CD4-positive, alpha-beta memory T cell (primary cell): ENCODE measurements at regions of chr17 and their contacts with region 1.

Region 1: DNA sequence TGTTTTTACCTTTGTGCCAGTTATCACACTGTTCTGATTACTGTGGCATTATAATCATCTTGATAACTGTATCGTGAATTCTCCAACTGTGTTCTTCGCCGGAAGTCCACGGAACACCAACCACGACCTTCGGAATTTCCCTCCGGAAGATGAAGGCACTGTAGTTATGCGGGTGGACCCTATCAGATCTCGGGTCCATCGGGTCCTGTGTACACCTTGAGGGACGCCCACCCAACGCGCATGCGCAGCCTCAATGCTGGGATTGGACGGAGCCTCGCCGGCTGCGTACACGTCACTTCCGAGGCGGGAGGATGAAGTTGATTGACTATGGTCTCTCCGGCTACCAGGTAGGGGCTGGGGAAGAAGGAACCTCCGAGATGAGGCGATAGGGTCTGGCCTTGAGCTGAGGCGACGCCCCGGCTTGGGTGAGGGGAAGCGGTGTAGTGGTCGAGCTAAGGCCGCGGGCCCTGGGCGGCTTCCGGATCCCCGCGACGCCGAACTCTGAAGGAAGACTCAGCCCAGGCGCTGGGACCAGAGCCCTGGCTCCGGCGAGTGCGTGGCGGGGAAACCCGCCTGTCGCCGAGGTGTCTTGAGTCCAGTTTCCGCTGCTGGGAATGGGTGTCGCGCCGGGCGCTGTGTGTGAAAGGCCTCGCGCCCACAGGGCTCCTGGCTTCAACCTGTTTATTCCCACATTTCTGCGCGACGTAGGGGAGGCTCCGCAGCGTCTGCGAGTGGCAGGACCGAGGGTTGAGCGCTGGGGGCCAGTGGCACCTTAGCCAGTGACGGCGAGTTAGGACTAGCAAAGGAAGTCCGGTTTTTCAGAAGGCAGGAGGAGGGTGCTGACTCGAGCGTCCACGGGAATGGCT is at the start of gene DHRS7B:
- DNase-seq: peak; percentile 94 to 97 (median 94)
- H3K4me3 ChIP-seq: peak within 1 kb of the TSS; percentile 31 to 97
- H3K4me3 Mint-ChIP-seq: peak within 1 kb of the TSS; percentile 91 to 98 (median 96)
- H3K27ac ChIP-seq: peak within 1 kb of the TSS; percentile 85
- H3K27ac Mint-ChIP-seq: peak within 1 kb of the TSS; percentile 95 to 99 (median 97)
- H3K4me1 ChIP-seq: peaks cover 27% of the 10 kb centered on the region
- H3K4me1 Mint-ChIP-seq: peaks cover 20 to 42% (median 35%) of the 10 kb centered on the region in 4 donors
- H3K27me3 ChIP-seq: no peaks in the 10 kb centered on the region
- H3K27me3 Mint-ChIP-seq: no peaks in the 10 kb centered on the region
- total RNA-seq, gene DHRS7B: 8.2 to 9.5 TPM

Region 2: GRCh38 chr17:21318439-21318838 is 191.6 kb after region 1 on chr17:
- CTCF ChIA-PET with region 1: no interaction called
- POLR2A ChIA-PET with region 1: no interaction called
- intact Hi-C with region 1: loop called (anchors 2 kb)
- DNase-seq: no peak
- H3K4me3 ChIP-seq: no peak overlapping the region
- H3K4me3 Mint-ChIP-seq: no peak overlapping the region
- H3K27ac ChIP-seq: no peak overlapping the region
- H3K27ac Mint-ChIP-seq: peak overlapping the region in 1 of 7 donors; percentile 74
- H3K4me1 ChIP-seq: no peaks in the 10 kb centered on the region
- H3K4me1 Mint-ChIP-seq: peaks cover 4 to 8% (median 6%) of the 10 kb centered on the region in 4 donors
- H3K27me3 ChIP-seq: no peaks in the 10 kb centered on the region
- H3K27me3 Mint-ChIP-seq: no peaks in the 10 kb centered on the region

Region 3: DNA sequence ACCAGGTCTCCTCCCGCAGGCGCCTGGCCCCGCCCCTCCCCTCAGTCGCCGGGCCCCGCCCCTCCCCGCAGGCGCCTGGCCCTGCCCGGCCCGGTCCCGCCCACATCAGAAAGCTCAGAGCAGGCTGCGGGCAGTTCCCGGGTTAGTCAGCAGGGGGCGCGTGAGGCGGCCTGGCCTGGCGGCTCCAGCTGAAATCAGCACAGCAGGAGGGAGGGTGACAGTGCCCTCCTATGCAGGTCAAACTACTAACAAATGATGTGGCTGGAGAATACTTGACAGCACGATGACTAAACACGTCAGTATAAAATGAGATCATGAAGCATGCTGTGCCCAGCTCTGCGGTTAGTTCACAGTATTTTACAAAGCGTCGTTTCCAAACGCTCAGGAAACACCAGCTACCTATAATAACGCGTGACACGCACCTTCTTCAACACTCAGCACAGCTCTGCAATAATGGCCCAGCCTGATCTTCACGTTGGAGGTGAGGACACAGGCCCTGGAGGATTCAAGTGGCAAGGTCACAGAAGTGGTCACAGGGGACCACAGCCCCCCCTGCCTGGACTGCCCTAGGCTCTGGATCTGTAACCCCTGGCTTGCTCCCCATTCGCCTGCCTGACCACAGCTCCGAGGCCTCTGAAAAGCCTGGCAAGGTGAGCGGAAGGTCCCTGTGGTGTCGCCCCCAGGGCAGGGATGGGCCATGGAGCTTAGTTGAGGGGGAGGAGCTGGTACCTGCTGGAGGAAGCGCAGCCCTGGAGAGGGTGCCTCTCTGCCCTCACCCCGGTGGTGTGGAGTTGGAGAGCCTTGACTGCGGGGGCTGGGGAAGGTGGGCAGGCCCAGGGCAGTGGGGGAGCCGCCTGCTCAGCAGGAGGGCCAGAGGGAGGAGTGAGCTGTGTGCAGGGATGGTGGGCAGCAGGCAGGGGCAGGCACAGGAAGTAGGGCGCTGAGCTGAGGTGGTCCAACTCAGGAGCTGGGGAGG is 330.5 kb after region 1 on chr17:
- CTCF ChIA-PET with region 1: interaction called, 5 read pairs
- POLR2A ChIA-PET with region 1: no interaction called
- intact Hi-C with region 1: loop called (anchors 2 kb)
- DNase-seq: peak; percentile 87 to 92 (median 88)
- H3K4me3 ChIP-seq: no peak overlapping the region
- H3K4me3 Mint-ChIP-seq: peak overlapping the region in 5 of 8 donors; percentile 23 to 61 (median 49)
- H3K27ac ChIP-seq: no peak overlapping the region
- H3K27ac Mint-ChIP-seq: peak overlapping the region in 6 of 7 donors; percentile 60 to 90 (median 82)
- H3K4me1 ChIP-seq: peaks cover 11% of the 10 kb centered on the region
- H3K4me1 Mint-ChIP-seq: peaks cover 13 to 22% (median 17%) of the 10 kb centered on the region in 4 donors
- H3K27me3 ChIP-seq: no peaks in the 10 kb centered on the region
- H3K27me3 Mint-ChIP-seq: peaks cover 8 to 13% of the 10 kb centered on the region in 2 donors

Region 4: GRCh38 chr17:21551081-21551881 is 424.4 kb after region 1 on chr17:
- CTCF ChIA-PET with region 1: no interaction called
- POLR2A ChIA-PET with region 1: no interaction called
- intact Hi-C with region 1: loop called (anchors 1 kb)
- DNase-seq: peak; percentile 74 to 81 (median 76)
- H3K4me3 ChIP-seq: peak overlapping the region in 1 of 2 donors; percentile 73
- H3K4me3 Mint-ChIP-seq: peak overlapping the region; percentile 83 to 92 (median 88)
- H3K27ac ChIP-seq: peak overlapping the region; percentile 34
- H3K27ac Mint-ChIP-seq: peak overlapping the region in 5 of 7 donors; percentile 34 to 61 (median 50)
- H3K4me1 ChIP-seq: peaks cover 18% of the 10 kb centered on the region
- H3K4me1 Mint-ChIP-seq: peaks cover 11 to 33% (median 20%) of the 10 kb centered on the region in 4 donors
- H3K27me3 ChIP-seq: no peaks in the 10 kb centered on the region
- H3K27me3 Mint-ChIP-seq: peaks cover 13 to 17% of the 10 kb centered on the region in 2 donors